B cell (primary cell): ENCODE measurements at regions of chr1 and their contacts with region 1.

Region 1: DNA sequence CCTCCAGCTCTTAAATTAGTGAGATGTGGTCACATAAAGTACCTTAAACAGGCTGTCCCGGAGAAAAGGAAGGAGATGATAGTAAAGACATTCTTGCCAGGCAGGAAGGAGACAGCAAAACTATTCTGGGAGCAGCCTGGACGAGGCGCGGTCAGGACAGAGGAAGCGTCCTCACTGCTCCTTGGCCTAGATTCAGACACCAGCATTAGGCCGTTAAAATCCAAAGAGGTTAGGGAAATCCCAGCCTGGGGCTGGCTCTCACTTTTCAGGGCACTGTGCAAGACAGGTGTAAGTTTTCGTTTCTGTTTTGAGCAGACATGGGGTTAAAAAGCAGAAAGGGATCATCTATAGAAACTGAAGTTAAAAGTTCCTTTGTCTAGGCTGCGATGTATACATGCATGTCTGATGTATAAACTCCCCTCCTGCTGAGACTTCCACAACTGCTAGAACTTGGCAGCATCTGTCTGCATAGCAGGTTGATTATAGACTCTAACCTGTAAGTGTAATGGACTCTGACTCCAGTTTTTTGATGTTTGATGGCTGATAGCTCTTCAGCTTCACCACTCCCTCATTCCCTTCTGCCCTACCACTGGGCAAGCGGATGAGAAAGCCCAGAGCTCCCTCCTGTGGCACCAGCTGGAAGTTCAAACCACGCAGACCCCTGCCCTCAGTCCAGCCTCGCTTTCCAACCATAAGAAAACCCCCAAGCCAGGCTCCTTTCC is 21.5 kb downstream of the STPG1 start:
- DNase-seq: peak; percentile 80
- ATAC-seq: peak; percentile 75
- H3K4me3 ChIP-seq: peak overlapping the region in 2 of 5 experiments; percentile 5 to 37
- H3K4me3 Mint-ChIP-seq: peak overlapping the region; percentile 81
- H3K27ac ChIP-seq: peak overlapping the region; percentile 81 to 92
- H3K27ac Mint-ChIP-seq: peak overlapping the region; percentile 92
- H3K4me1 ChIP-seq: peaks cover 26 to 33% of the 10 kb centered on the region in 2 donors
- H3K4me1 Mint-ChIP-seq: peaks cover 31% of the 10 kb centered on the region
- H3K27me3 ChIP-seq: no peaks in the 10 kb centered on the region
- H3K27me3 Mint-ChIP-seq: no peaks in the 10 kb centered on the region
- CTCF ChIP-seq: peak; percentile 74

Region 2: DNA sequence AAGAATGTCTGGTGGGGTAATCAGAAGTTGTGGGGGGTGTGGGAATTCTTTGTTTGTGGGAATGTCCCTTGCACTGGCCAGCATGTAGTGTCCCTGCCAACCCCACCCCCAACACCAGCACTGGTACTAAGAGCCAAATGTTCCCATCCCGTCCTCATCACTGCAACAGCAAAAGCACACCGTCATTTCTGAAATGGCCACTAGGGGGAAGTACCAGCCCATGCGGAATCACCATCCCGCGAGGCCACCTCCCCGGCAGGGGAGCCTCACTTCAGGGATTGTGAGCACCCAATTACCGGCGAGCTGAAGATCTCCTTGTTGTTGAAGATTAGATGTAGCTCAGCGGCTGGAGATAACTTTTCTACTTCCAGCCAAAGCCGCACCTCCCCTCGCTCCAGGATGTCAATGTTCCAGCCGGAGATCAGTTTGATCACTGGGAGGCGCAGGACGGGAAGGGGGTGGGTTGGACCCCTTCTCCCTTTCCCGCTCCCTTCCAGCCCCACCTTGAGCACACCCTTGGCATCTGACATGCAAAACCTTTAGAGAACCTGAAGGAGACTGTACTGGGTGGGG is 321.1 kb before region 1 on chr1:
- CTCF ChIA-PET with region 1: interaction called, 60 read pairs
- POLR2A ChIA-PET with region 1: no interaction called
- intact Hi-C with region 1: loop called (anchors 1 kb)
- DNase-seq: peak; percentile 82
- ATAC-seq: peak; percentile 88
- H3K4me3 ChIP-seq: no peak overlapping the region
- H3K4me3 Mint-ChIP-seq: no peak overlapping the region
- H3K27ac ChIP-seq: no peak overlapping the region
- H3K27ac Mint-ChIP-seq: no peak overlapping the region
- H3K4me1 ChIP-seq: peaks cover 0 to 3% of the 10 kb centered on the region in 2 donors
- H3K4me1 Mint-ChIP-seq: peaks cover 4% of the 10 kb centered on the region
- H3K27me3 ChIP-seq: peaks cover 0 to 4% (median 1%) of the 10 kb centered on the region in 4 experiments
- H3K27me3 Mint-ChIP-seq: peaks cover 8% of the 10 kb centered on the region
- CTCF ChIP-seq: peak; percentile 93

Region 3: GRCh38 chr1:24157918-24158481 is 234.0 kb before region 1 on chr1:
- CTCF ChIA-PET with region 1: interaction called, 387 read pairs
- POLR2A ChIA-PET with region 1: interaction called, 6 read pairs
- intact Hi-C with region 1: no loop called
- DNase-seq: no peak
- ATAC-seq: no peak
- H3K4me3 ChIP-seq: no peak overlapping the region
- H3K4me3 Mint-ChIP-seq: no peak overlapping the region
- H3K27ac ChIP-seq: no peak overlapping the region
- H3K27ac Mint-ChIP-seq: no peak overlapping the region
- H3K4me1 ChIP-seq: peaks cover 0 to 4% of the 10 kb centered on the region in 2 donors
- H3K4me1 Mint-ChIP-seq: peaks cover 16% of the 10 kb centered on the region
- H3K27me3 ChIP-seq: no peaks in the 10 kb centered on the region
- H3K27me3 Mint-ChIP-seq: no peaks in the 10 kb centered on the region
- CTCF ChIP-seq: no peak

Region 4: DNA sequence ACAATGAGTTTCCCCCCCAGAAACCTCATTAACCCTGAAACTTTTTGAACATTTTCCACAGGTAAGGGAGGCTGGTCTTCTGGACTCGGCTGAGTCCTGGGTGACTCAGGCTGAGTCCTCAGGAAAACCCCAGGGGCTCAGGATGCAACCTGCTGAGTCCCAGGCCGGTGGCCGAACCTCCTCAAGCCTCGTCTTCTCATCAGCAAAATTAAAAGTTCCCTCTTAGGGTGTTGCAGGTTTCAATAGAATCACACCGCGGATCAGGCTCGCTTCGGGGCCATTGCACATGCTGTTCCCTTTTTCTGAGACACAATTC is 107.9 kb before region 1 on chr1:
- CTCF ChIA-PET with region 1: no interaction called
- POLR2A ChIA-PET with region 1: no interaction called
- intact Hi-C with region 1: no loop called
- DNase-seq: no peak
- ATAC-seq: no peak
- H3K4me3 ChIP-seq: no peak overlapping the region
- H3K4me3 Mint-ChIP-seq: no peak overlapping the region
- H3K27ac ChIP-seq: no peak overlapping the region
- H3K27ac Mint-ChIP-seq: no peak overlapping the region
- H3K4me1 ChIP-seq: no peaks in the 10 kb centered on the region
- H3K4me1 Mint-ChIP-seq: no peaks in the 10 kb centered on the region
- H3K27me3 ChIP-seq: no peaks in the 10 kb centered on the region
- H3K27me3 Mint-ChIP-seq: peaks cover 5% of the 10 kb centered on the region
- CTCF ChIP-seq: no peak

Region 5: GRCh38 chr1:24374891-24375786 is 16.9 kb before region 1 on chr1:
- CTCF ChIA-PET with region 1: interaction called, 31 read pairs
- POLR2A ChIA-PET with region 1: no interaction called
- intact Hi-C with region 1: no loop called
- DNase-seq: no peak
- ATAC-seq: no peak
- H3K4me3 ChIP-seq: no peak overlapping the region
- H3K4me3 Mint-ChIP-seq: no peak overlapping the region
- H3K27ac ChIP-seq: peak overlapping the region in 1 of 2 donors; percentile 24
- H3K27ac Mint-ChIP-seq: peak overlapping the region; percentile 68
- H3K4me1 ChIP-seq: peaks cover 21 to 24% of the 10 kb centered on the region in 2 donors
- H3K4me1 Mint-ChIP-seq: peaks cover 21% of the 10 kb centered on the region
- H3K27me3 ChIP-seq: no peaks in the 10 kb centered on the region
- H3K27me3 Mint-ChIP-seq: no peaks in the 10 kb centered on the region
- CTCF ChIP-seq: no peak

Region 6: DNA sequence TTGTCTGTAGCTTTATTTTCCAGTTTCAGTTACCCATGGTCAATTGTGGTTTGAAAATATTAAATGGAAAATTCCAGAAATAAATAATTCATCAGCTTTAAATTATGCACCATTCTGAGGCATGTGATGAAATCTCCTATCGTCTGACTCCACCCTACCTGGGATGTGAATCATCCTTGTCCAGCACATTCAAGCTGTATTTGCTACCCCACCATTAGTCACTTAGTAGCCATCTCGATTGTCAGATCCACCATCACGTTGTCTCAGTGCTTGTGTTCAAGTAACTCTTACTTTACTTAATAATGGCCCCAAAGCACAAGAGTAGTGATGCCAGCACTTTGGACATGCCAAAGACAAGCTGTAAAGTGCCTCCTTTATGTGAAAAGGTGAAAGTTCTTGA is 17.5 kb after region 1 on chr1:
- CTCF ChIA-PET with region 1: interaction called, 86 read pairs
- POLR2A ChIA-PET with region 1: interaction called, 3 read pairs
- intact Hi-C with region 1: no loop called
- DNase-seq: no peak
- ATAC-seq: no peak
- H3K4me3 ChIP-seq: no peak overlapping the region
- H3K4me3 Mint-ChIP-seq: no peak overlapping the region
- H3K27ac ChIP-seq: no peak overlapping the region
- H3K27ac Mint-ChIP-seq: no peak overlapping the region
- H3K4me1 ChIP-seq: peaks cover 6 to 12% of the 10 kb centered on the region in 2 donors
- H3K4me1 Mint-ChIP-seq: peaks cover 12% of the 10 kb centered on the region
- H3K27me3 ChIP-seq: no peaks in the 10 kb centered on the region
- H3K27me3 Mint-ChIP-seq: no peaks in the 10 kb centered on the region
- CTCF ChIP-seq: no peak

Region 7: GRCh38 chr1:24609949-24610382 is 217.9 kb after region 1 on chr1:
- CTCF ChIA-PET with region 1: no interaction called
- POLR2A ChIA-PET with region 1: no interaction called
- intact Hi-C with region 1: no loop called
- DNase-seq: no peak
- ATAC-seq: no peak
- H3K4me3 ChIP-seq: no peak overlapping the region
- H3K4me3 Mint-ChIP-seq: no peak overlapping the region
- H3K27ac ChIP-seq: no peak overlapping the region
- H3K27ac Mint-ChIP-seq: no peak overlapping the region
- H3K4me1 ChIP-seq: no peaks in the 10 kb centered on the region
- H3K4me1 Mint-ChIP-seq: no peaks in the 10 kb centered on the region
- H3K27me3 ChIP-seq: peaks cover 0 to 4% (median 1%) of the 10 kb centered on the region in 4 experiments
- H3K27me3 Mint-ChIP-seq: peaks cover 12% of the 10 kb centered on the region
- CTCF ChIP-seq: no peak

Region 8: DNA sequence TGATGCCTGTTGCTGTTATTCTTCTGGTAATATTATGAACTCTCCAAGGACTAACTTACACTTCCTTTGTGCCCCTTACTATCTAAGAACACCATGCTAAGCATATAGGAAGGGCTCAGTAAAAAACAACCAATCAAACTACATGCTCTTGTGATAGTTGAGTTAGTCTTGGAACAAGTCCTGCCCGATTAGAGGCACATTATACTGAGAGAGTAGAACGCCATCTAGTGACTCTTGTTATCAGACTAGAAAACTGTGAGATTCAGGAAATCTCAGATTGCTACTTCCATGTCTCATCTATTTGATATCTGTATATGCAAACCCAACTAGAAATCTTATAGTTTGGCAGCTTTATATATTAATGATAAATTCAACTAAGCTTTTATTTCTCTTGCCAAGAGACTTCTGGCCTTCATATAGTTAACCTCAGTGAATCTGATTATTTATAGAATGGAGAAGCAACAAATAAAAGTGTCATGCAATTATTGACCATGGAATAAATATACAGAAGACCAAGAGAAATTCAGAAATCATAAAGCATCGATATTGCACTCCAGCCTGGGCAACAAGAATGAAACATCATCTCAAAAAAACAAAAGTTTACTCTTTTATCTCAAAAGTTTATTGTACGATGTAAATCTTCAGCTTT is 243.3 kb after region 1 on chr1:
- CTCF ChIA-PET with region 1: interaction called, 9 read pairs
- POLR2A ChIA-PET with region 1: no interaction called
- intact Hi-C with region 1: loop called (anchors 2 kb)
- DNase-seq: peak; percentile 68
- ATAC-seq: peak; percentile 68
- H3K4me3 ChIP-seq: no peak overlapping the region
- H3K4me3 Mint-ChIP-seq: no peak overlapping the region
- H3K27ac ChIP-seq: no peak overlapping the region
- H3K27ac Mint-ChIP-seq: peak overlapping the region; percentile 34
- H3K4me1 ChIP-seq: no peaks in the 10 kb centered on the region
- H3K4me1 Mint-ChIP-seq: peaks cover 2% of the 10 kb centered on the region
- H3K27me3 ChIP-seq: peaks cover 0 to 3% (median under 1%) of the 10 kb centered on the region in 4 experiments
- H3K27me3 Mint-ChIP-seq: peaks cover 8% of the 10 kb centered on the region
- CTCF ChIP-seq: peak; percentile 75